ENCODE measurements at regions of chr7 and their contacts with region 1.

Region 1: DNA sequence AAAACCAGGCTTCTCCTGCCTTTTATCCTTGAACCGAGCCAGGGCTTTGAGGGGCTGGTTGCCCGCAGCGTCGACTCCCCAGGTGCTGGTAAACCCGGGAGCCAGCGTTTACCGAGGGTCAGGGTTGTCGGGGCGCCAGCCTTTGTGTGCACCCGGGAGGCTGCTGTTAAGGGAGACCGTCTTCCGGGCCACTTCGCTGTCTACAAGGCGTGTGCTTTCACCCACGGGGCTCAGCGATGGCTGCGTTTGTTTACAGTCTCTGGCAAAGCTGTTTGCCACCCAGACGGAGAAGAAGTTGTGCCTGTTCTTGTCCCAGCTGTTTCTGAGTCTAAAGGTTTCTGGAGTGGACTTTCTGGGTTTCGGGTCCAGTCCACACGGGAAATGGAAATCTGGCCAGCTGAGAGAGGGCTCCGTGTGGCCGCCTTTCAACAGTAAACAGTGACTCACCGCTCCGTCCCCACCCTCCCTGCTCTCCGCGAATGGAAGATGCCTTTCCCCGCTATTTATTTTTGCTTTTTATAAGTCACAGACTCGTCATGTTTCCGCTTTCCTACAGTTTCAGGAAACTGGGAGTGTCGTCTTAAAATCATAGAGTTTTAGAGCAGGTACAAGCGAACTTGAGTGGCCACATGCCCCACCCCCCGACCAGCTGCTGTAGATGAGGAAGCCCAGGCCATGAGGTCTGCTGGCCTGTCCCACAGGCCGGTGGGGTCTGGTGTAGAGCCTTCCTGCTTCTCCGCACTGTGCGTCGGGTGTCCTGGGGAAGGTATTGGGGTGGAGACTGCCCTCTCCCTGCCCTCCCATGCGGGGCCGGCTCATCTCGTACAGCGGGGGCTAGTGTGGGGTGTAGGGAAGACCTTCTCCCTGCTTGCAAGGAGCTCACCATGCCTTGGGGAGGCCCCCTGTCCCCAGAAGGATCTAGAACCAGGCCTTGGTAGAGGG is 2.3 kb downstream of the MAFK start:
- DNase-seq: peak; percentile 88 to 97
- H3K4me3 ChIP-seq: peak overlapping the region; percentile 64
- H3K27ac ChIP-seq: peak overlapping the region; percentile 89
- H3K4me1 ChIP-seq: peaks cover 52% of the 10 kb centered on the region
- H3K27me3 ChIP-seq: no peaks in the 10 kb centered on the region
- CTCF ChIP-seq: no peak

Region 2: GRCh38 chr7:1512781-1513656 is 19.7 kb before region 1 on chr7:
- CTCF ChIA-PET with region 1: interaction called, 12 read pairs
- POLR2A ChIA-PET with region 1: no interaction called
- intact Hi-C with region 1: loop called (anchors 2 kb)
- DNase-seq: peak; percentile 96
- H3K4me3 ChIP-seq: no peak overlapping the region
- H3K27ac ChIP-seq: peak overlapping the region; percentile 77
- H3K4me1 ChIP-seq: peaks cover 48% of the 10 kb centered on the region
- H3K27me3 ChIP-seq: no peaks in the 10 kb centered on the region
- CTCF ChIP-seq: no peak

Region 3: GRCh38 chr7:1569833-1570633 is 37.3 kb after region 1 on chr7 and contains the start of gene PSMG3:
- CTCF ChIA-PET with region 1: no interaction called
- POLR2A ChIA-PET with region 1: interaction called, 3 read pairs
- intact Hi-C with region 1: loop called (anchors 1 kb)
- DNase-seq: peak; percentile 80 to 93
- H3K4me3 ChIP-seq: peak within 1 kb of the TSS; percentile 97
- H3K27ac ChIP-seq: peak within 1 kb of the TSS; percentile 65
- H3K4me1 ChIP-seq: peaks cover 34% of the 10 kb centered on the region
- H3K27me3 ChIP-seq: no peaks in the 10 kb centered on the region
- CTCF ChIP-seq: peak; percentile 44; the same call in 1 of the 2 replicates
- total RNA-seq, gene PSMG3: 63.3 and 78.9 TPM in 2 replicates

Region 4: DNA sequence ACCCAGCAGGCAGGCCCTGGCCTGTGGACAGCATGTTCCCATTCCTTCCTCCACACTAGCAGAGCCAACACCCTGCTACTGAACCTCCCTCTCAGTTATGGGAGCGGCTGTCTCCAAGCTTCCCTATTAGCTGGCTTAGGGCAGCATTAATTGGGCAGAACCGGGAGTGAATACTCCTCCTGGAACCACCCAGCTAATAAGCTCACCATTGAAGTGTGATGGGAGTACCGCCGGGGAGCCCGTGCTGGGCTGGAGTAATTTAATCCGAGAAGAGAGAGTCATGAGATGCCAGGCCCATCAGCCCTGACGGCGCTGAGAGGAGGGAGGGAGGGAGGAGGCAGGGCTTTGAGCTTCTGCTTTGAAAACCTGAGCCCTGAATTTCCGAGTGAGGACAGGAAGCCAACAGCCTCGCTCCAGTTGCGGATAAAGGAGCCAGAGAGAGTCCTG is 105.5 kb after region 1 on chr7:
- CTCF ChIA-PET with region 1: no interaction called
- POLR2A ChIA-PET with region 1: no interaction called
- intact Hi-C with region 1: no loop called
- DNase-seq: no peak
- H3K4me3 ChIP-seq: no peak overlapping the region
- H3K27ac ChIP-seq: no peak overlapping the region
- H3K4me1 ChIP-seq: no peaks in the 10 kb centered on the region
- H3K27me3 ChIP-seq: peaks cover 43% of the 10 kb centered on the region
- CTCF ChIP-seq: no peak

Region 5: DNA sequence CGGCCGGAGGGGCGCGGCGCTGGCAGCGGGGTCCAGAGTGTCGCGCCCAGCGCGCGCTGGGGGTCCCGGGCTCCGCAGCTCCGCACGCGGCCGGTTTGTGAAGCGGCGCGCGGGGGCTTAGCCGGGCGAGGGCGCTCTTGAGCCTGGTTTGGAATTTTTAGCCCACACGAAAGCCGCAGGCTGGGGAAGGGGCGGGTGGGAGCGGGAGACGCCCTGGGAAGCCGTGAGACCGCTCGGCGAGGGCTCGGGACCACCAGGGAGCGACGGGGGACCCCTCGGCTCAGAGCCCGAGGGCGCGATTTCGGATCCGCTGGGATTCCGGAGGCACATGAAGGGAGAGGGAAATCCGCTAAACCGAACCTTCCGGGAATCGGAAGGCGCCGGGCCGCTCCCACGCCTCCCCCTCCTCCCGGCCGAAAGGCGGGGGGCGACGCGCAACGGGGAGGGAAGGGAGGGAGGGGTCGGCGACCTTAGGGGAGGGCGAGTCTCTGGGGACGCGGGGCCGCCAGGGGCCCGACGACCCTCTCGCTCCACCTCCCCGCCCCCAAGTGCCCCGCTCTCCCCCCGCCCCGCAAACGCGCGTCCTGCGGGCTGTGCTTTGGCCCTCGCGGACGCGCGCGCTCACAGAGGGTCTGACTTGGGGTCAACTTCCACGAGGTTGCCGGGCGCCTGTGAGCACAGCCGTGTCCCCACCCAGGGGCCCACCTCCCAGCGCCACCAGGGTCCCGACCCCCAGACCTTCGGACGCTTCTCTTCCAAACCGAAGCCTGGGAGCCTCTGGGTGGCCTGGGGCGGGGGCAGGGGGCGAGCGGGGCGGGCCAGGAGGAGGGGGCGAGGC is 132.2 kb after region 1 on chr7:
- CTCF ChIA-PET with region 1: no interaction called
- POLR2A ChIA-PET with region 1: no interaction called
- intact Hi-C with region 1: no loop called
- DNase-seq: peak in 1 of 2 experiments; percentile 66
- H3K4me3 ChIP-seq: peak overlapping the region; percentile 38; the same call in 1 of the 2 replicates
- H3K27ac ChIP-seq: no peak overlapping the region
- H3K4me1 ChIP-seq: peaks cover 8% of the 10 kb centered on the region; the same call in 1 of the 2 replicates
- H3K27me3 ChIP-seq: peaks cover 60% of the 10 kb centered on the region
- CTCF ChIP-seq: peak; percentile 79